ENCODE measurements at regions of chr7 and their contacts with region 1.

Region 1: GRCh38 chr7:125241548-125241947 is 311.9 kb upstream of the POT1 start:
- DNase-seq: no peak
- H3K4me3 Mint-ChIP-seq: no peak overlapping the region
- H3K27ac Mint-ChIP-seq: no peak overlapping the region
- H3K4me1 Mint-ChIP-seq: peaks cover 4% of the 10 kb centered on the region
- H3K27me3 Mint-ChIP-seq: no peaks in the 10 kb centered on the region

Region 2: DNA sequence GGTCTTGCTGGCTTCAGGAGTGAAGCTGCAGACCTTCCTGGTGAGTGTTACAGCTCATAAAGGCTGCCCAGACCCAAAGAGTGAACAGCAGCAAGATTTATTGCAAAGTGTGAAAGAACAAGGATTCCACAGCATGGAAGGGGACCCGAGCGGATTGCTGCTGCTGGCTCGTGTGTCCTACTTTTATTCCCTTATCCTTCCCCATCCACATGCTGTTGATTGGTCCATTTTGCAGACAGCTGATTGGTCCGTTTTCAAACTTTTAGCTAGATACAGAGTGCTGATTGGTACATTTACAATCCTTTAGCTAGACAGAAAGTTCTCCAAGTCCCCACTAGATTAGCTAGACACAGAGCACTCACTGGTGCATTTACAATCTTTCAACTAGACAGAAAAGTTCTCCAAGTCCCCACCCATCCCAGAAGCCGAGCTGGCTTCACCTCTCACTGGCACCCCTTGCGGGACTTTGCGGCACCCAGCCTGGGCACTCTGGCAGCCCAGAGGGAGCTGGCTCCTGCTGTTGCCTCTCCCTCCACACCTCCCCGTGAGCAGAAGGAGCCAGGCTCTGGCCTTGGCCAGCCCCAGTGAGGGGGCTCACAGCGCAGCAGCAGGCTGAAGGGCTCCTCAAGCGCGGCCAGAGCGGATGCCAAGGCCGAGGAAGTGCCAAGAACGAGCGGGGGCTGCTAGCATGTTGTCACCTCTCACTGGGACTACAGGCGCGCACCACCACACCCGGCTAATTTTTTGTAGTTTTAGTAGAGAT is 57.6 kb after region 1 on chr7:
- intact Hi-C with region 1: loop called (anchors 10 kb)
- DNase-seq: no peak
- H3K4me3 Mint-ChIP-seq: no peak overlapping the region
- H3K27ac Mint-ChIP-seq: no peak overlapping the region
- H3K4me1 Mint-ChIP-seq: no peaks in the 10 kb centered on the region
- H3K27me3 Mint-ChIP-seq: no peaks in the 10 kb centered on the region

Measured in activated CD4-positive, alpha-beta T cell treated with anti-CD3 and anti-CD28 coated beads, Interleukin-2, amount 10 ng/mL, durations not matched to agents 24 days and 14 days (primary cell).